ENCODE measurements at regions of chr13 and their contacts with region 1.

Region 1: DNA sequence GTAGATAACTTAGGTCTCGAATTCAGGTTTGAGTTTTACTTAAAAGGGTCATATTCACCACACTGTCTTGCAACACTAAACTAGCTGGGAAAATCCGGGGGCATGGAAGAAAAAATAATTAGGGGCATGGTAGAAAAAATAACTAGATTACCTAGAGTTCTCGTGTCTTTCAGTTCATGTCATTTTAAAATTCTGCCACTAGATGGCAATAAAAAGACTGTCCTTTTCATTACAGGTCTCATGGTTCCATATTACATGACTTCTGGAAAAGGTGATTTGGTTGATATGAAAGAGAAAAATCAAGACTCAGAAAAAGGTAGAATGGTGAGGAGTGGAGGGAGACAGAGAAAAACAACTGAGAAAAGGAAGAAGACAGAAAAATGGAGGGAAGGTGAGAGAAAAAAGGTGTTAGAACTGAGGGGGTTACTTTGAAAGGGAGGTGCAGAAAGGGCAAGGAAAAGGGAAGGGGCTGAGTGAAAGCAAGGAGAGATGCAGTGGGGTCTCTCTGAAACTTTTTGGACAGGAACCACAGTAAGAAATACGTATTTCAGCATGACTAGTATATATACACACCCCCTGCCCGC is 299.0 kb downstream of the KLF12 start:
- H3K4me3 Mint-ChIP-seq: no peak overlapping the region
- H3K27ac Mint-ChIP-seq: no peak overlapping the region
- H3K4me1 Mint-ChIP-seq: no peaks in the 10 kb centered on the region
- H3K27me3 Mint-ChIP-seq: no peaks in the 10 kb centered on the region

Region 2: DNA sequence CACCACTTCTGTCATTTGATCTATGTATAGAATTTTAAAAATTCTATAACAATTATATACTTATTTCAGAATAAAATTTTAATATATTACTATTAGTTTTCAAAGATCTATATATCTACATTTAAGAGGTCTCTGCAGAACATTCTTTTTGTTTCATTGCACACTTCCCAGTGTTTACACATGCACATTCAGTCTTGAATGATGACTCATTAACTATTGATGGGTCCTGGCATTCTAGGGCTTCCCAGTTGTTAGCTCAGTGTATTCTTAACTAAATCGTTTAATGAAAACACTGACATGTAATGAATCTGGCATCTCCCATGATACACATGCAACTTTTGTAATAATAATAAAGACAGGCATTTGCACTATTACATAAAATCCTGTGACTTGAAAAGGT is 25.7 kb before region 1 on chr13:
- intact Hi-C with region 1: no loop called
- H3K4me3 Mint-ChIP-seq: no peak overlapping the region
- H3K27ac Mint-ChIP-seq: no peak overlapping the region
- H3K4me1 Mint-ChIP-seq: no peaks in the 10 kb centered on the region
- H3K27me3 Mint-ChIP-seq: no peaks in the 10 kb centered on the region

Region 3: GRCh38 chr13:74287724-74288169 is 452.5 kb after region 1 on chr13:
- intact Hi-C with region 1: loop called (anchors 5 kb)
- H3K4me3 Mint-ChIP-seq: peak overlapping the region; percentile 50
- H3K27ac Mint-ChIP-seq: no peak overlapping the region
- H3K4me1 Mint-ChIP-seq: peaks cover 25% of the 10 kb centered on the region
- H3K27me3 Mint-ChIP-seq: peaks cover 24% of the 10 kb centered on the region

Region 4: DNA sequence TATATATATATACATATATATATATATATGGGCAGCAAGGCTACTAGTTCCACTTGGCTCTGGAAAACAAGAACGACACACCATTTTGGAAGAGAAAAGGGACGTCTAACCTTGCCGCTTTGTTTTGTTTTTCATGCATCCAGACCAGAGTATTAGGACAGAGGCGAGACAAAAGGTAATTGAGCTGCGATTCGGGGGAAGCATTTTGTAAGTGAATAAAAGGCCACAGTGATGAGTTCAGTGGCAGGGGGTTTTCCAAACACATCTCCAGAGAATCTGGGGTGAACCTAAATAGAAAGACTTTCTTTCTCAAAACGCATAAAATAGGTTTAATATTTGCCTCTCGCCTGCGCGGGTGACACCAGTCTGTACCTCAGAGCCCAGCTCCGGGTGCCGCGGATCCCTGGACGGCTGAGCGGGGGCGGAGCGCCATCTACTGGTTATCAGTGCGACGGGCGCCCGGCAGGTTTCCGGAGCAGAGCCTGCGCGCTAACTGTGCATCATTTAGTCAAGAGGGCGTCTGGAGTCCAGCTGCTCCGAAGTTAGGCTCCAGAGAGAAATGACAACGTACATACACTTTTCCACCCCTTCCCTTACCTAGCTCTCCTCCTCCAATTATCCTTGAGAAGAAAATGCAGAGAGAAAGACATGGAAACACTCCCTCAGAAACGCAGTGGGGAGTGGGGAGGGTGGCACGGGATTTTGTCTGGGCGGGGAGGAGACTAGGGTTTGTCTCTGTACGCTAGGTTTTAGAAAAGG is 1384.4 kb after region 1 on chr13:
- intact Hi-C with region 1: loop called (anchors 1 kb)
- H3K4me3 Mint-ChIP-seq: no peak overlapping the region
- H3K27ac Mint-ChIP-seq: no peak overlapping the region
- H3K4me1 Mint-ChIP-seq: peaks cover 5% of the 10 kb centered on the region
- H3K27me3 Mint-ChIP-seq: peaks cover 14% of the 10 kb centered on the region

Measured in dendritic cell treated with granulocyte-macrophage colony-stimulating factor and Interleukin-4, amounts not matched to agents 40 ng/mL and 50 ng/mL, for 4 days (primary cell).